ENCODE measurements at regions of chr10 and their contacts with region 1.

Region 1: DNA sequence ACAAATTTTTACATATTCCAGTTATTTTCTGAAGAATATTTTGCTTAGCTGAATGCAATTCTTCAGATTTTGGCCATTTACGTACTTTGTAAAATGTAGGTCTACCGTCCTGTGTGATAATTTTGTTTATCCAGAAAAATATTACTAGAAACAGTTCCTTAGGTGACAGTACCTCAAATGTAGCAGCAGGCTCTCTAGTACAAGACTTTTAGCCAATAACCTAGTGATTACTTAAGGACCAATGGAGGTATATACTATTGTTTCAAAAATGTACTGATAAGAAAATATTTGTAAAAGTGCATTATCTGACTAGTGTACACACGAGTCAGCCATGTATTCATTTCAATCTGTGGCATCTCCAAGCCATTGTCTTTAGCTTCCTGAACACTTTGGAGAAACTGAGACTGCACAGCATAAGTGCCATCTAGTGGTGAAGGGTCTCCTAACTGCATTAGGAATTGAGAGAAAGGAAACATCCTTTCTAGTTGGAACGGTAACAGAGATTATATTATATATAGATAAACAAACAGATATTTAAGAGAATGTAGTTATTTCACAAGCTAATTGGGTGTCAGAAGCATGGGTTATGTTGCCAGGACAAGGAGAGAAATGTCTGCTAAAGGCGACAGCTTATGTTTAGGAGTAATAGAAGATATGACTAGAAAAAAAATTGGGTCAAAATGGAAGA is 23.7 kb downstream of the RTKN2 start:
- DNase-seq: peak; percentile 70
- H3K4me3 Mint-ChIP-seq: peak overlapping the region; percentile 43
- H3K27ac Mint-ChIP-seq: peak overlapping the region; percentile 85
- H3K4me1 Mint-ChIP-seq: peaks cover 37% of the 10 kb centered on the region
- H3K27me3 Mint-ChIP-seq: no peaks in the 10 kb centered on the region

Region 2: DNA sequence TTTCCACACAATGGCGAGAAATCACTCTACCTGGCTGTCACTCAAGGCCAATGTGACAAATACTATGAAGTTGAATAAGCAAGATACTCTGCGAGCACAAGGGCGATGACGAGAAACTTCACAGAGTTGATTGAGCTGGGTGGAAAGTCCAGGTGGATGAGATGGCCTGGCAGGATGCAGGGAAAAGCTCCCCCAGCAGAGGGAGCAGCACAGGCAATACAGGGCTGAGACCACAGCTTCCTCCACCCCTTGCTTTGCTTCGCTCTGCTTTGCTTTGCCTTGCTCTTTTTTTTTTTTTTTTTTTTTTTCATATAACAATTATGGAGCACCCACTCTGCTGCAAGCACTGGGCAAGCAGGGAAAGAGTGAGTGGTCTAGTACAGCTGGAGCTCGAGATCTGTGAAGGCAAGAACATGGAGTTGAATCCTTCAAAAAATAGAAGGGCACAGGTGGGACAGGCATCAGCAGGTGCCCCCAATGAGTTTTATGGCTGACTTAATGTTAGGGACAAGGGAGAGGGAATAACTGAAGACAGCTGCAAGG is 493.9 kb before region 1 on chr10:
- CTCF ChIA-PET with region 1: interaction called, 17 read pairs
- DNase-seq: peak; percentile 81
- H3K4me3 Mint-ChIP-seq: no peak overlapping the region
- H3K27ac Mint-ChIP-seq: no peak overlapping the region
- H3K4me1 Mint-ChIP-seq: peaks cover 29% of the 10 kb centered on the region
- H3K27me3 Mint-ChIP-seq: no peaks in the 10 kb centered on the region

Region 3: GRCh38 chr10:61896854-61897661 is 347.9 kb before region 1 on chr10:
- CTCF ChIA-PET with region 1: interaction called, 28 read pairs
- DNase-seq: peak; percentile 69
- H3K4me3 Mint-ChIP-seq: peak overlapping the region; percentile 81
- H3K27ac Mint-ChIP-seq: peak overlapping the region; percentile 94
- H3K4me1 Mint-ChIP-seq: peaks cover 35% of the 10 kb centered on the region
- H3K27me3 Mint-ChIP-seq: no peaks in the 10 kb centered on the region

Region 4: GRCh38 chr10:62038609-62039190 is 206.2 kb before region 1 on chr10:
- CTCF ChIA-PET with region 1: interaction called, 135 read pairs
- DNase-seq: peak; percentile 87
- H3K4me3 Mint-ChIP-seq: peak overlapping the region; percentile 13
- H3K27ac Mint-ChIP-seq: peak overlapping the region; percentile 87
- H3K4me1 Mint-ChIP-seq: peaks cover 84% of the 10 kb centered on the region
- H3K27me3 Mint-ChIP-seq: no peaks in the 10 kb centered on the region

Region 5: GRCh38 chr10:62050893-62051433 is 194.0 kb before region 1 on chr10:
- CTCF ChIA-PET with region 1: interaction called, 23 read pairs
- DNase-seq: peak; percentile 86
- H3K4me3 Mint-ChIP-seq: peak overlapping the region; percentile 94
- H3K27ac Mint-ChIP-seq: peak overlapping the region; percentile 100
- H3K4me1 Mint-ChIP-seq: peaks cover 98% of the 10 kb centered on the region
- H3K27me3 Mint-ChIP-seq: no peaks in the 10 kb centered on the region

Region 6: GRCh38 chr10:62082729-62083411 is 162.1 kb before region 1 on chr10:
- CTCF ChIA-PET with region 1: interaction called, 15 read pairs
- DNase-seq: peak; percentile 73
- H3K4me3 Mint-ChIP-seq: peak overlapping the region; percentile 40
- H3K27ac Mint-ChIP-seq: peak overlapping the region; percentile 92
- H3K4me1 Mint-ChIP-seq: peaks cover 87% of the 10 kb centered on the region
- H3K27me3 Mint-ChIP-seq: no peaks in the 10 kb centered on the region

Region 7: GRCh38 chr10:62166331-62167131 is 78.4 kb before region 1 on chr10:
- CTCF ChIA-PET with region 1: no interaction called
- DNase-seq: no peak
- H3K4me3 Mint-ChIP-seq: no peak overlapping the region
- H3K27ac Mint-ChIP-seq: no peak overlapping the region
- H3K4me1 Mint-ChIP-seq: peaks cover 5% of the 10 kb centered on the region
- H3K27me3 Mint-ChIP-seq: no peaks in the 10 kb centered on the region

Region 8: DNA sequence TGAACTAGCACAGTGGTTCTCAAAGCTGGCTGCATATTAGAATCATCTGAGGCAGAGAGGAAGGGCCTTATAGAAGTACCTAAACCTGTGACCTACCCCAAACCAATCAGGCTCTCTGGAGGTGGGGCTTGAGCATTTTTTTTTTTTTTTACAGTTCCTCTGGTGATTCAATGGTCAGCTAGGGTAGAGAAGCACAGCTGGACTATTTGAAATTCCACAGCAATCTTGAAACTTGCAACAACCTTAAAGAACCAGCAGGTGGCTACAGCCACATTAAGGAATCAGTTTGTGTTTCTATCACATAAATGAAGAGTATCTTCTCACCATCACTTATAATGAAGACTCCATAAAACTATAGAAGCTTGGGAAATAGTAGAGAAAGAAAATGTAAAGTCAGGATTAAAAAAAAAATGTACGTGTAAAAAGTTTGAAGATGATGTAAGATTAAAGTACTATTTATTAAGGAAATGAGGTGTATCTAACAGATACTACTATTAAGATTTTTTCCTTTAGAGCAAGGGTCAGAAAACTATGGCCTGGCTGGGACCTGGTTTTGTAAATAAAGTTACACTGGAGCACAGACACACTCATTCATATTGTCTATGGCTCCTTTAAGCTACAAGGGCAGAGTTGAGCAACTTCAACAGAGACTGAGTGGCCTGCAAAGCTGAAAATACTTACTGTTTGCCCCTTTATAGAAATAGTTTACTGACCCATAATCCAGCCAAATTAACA is 19.9 kb after region 1 on chr10:
- CTCF ChIA-PET with region 1: interaction called, 12 read pairs
- DNase-seq: no peak
- H3K4me3 Mint-ChIP-seq: no peak overlapping the region
- H3K27ac Mint-ChIP-seq: no peak overlapping the region
- H3K4me1 Mint-ChIP-seq: peaks cover 41% of the 10 kb centered on the region
- H3K27me3 Mint-ChIP-seq: peaks cover 20% of the 10 kb centered on the region

Region 9: GRCh38 chr10:62399211-62399610 is 154.3 kb after region 1 on chr10:
- CTCF ChIA-PET with region 1: no interaction called
- DNase-seq: no peak
- H3K4me3 Mint-ChIP-seq: no peak overlapping the region
- H3K27ac Mint-ChIP-seq: no peak overlapping the region
- H3K4me1 Mint-ChIP-seq: no peaks in the 10 kb centered on the region
- H3K27me3 Mint-ChIP-seq: peaks cover 9% of the 10 kb centered on the region